GM23248 (cell line): ENCODE measurements at regions of chr9 and their contacts with region 1.

Region 1: GRCh38 chr9:126471084-126471624 is 142.6 kb upstream of the LMX1B start:
- DNase-seq: peak; percentile 91
- H3K4me3 ChIP-seq: peak overlapping the region; percentile 65
- H3K27ac ChIP-seq: peak overlapping the region; percentile 90
- H3K4me1 ChIP-seq: peaks cover 53% of the 10 kb centered on the region
- H3K27me3 ChIP-seq: no peaks in the 10 kb centered on the region

Region 2: DNA sequence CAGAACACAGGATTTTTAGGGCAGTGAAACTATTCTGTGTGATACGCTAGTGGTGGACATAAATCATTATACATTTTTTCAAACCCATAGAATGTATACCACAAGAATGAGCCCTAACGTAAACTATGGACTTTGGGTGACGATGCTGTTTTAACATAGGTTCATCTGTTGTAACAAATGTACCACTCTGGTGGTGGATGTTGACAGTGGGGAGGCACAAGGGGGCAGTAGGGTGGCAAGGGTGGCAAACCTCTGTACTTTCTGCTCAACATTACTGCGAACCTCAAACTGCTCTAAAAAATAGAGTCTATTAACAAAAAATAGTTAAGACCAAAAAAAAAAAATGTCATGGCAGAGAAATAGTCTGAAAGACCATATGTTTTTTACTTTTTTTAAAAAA is 153.6 kb before region 1 on chr9:
- in situ Hi-C with region 1: loop called (anchors 10 kb)
- DNase-seq: peak; percentile 21
- H3K4me3 ChIP-seq: no peak overlapping the region
- H3K27ac ChIP-seq: no peak overlapping the region
- H3K4me1 ChIP-seq: no peaks in the 10 kb centered on the region
- H3K27me3 ChIP-seq: no peaks in the 10 kb centered on the region